Calu3 (cell line): ENCODE measurements at regions of chr14 and their contacts with region 1.

Region 1: DNA sequence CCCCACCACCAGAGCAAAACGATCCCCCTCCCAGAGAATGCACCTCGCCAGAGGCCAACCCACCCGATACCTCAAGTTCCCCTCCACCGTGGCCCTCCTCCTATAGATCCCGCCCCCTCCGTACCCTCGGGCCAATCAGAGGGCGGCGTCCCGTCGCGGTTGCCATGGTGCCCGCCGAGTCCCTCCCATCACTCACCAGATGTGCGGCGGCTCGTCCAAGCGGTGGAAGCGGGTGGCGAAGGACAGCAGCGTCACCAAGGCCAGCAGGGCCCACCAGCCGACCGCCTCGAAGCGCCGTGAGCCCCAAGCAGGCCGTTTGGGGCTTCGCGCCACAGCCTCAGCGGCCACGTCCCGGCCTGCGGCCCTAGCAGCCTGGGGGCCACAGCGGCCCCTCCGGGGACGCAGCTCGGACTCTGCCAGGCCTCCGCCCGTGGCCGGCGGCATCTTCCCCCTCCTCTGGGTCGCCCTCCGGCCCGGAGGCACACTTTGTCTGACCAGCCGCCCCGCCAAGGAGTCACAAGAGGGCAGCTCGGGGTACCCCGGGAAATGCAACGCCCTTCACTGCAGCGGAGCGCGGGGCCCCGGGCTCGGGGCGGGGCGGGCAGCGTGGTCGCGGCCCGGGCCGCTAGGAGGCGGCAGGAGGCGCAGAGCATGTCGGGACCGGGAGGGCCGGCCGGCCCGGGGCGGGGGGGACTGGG is at the start of gene POMT2:
- DNase-seq: peak; percentile 94
- H3K4me3 Mint-ChIP-seq: peak within 1 kb of the TSS; percentile 96
- H3K27ac Mint-ChIP-seq: peak within 1 kb of the TSS; percentile 97
- H3K4me1 Mint-ChIP-seq: peaks cover 31% of the 10 kb centered on the region
- H3K27me3 Mint-ChIP-seq: no peaks in the 10 kb centered on the region
- CTCF ChIP-seq: peak; percentile 45
- total RNA-seq, gene POMT2: 21.7 and 22.9 TPM in 2 replicates

Region 2: GRCh38 chr14:76337635-76338545 is 982.5 kb before region 1 on chr14:
- CTCF ChIA-PET with region 1: no interaction called
- intact Hi-C with region 1: no loop called
- DNase-seq: no peak
- H3K4me3 Mint-ChIP-seq: no peak overlapping the region
- H3K27ac Mint-ChIP-seq: no peak overlapping the region
- H3K4me1 Mint-ChIP-seq: no peaks in the 10 kb centered on the region
- H3K27me3 Mint-ChIP-seq: peaks cover 66% of the 10 kb centered on the region
- CTCF ChIP-seq: no peak

Region 3: GRCh38 chr14:77306851-77307765 is 13.3 kb before region 1 on chr14:
- CTCF ChIA-PET with region 1: interaction called, 94 read pairs
- intact Hi-C with region 1: loop called (anchors 1 kb)
- DNase-seq: no peak
- H3K4me3 Mint-ChIP-seq: no peak overlapping the region
- H3K27ac Mint-ChIP-seq: no peak overlapping the region
- H3K4me1 Mint-ChIP-seq: peaks cover 36% of the 10 kb centered on the region
- H3K27me3 Mint-ChIP-seq: no peaks in the 10 kb centered on the region
- CTCF ChIP-seq: no peak

Region 4: GRCh38 chr14:77390188-77390587 is 69.8 kb after region 1 on chr14:
- CTCF ChIA-PET with region 1: no interaction called
- intact Hi-C with region 1: no loop called
- DNase-seq: no peak
- H3K4me3 Mint-ChIP-seq: no peak overlapping the region
- H3K27ac Mint-ChIP-seq: no peak overlapping the region
- H3K4me1 Mint-ChIP-seq: no peaks in the 10 kb centered on the region
- H3K27me3 Mint-ChIP-seq: no peaks in the 10 kb centered on the region
- CTCF ChIP-seq: no peak

Region 5: DNA sequence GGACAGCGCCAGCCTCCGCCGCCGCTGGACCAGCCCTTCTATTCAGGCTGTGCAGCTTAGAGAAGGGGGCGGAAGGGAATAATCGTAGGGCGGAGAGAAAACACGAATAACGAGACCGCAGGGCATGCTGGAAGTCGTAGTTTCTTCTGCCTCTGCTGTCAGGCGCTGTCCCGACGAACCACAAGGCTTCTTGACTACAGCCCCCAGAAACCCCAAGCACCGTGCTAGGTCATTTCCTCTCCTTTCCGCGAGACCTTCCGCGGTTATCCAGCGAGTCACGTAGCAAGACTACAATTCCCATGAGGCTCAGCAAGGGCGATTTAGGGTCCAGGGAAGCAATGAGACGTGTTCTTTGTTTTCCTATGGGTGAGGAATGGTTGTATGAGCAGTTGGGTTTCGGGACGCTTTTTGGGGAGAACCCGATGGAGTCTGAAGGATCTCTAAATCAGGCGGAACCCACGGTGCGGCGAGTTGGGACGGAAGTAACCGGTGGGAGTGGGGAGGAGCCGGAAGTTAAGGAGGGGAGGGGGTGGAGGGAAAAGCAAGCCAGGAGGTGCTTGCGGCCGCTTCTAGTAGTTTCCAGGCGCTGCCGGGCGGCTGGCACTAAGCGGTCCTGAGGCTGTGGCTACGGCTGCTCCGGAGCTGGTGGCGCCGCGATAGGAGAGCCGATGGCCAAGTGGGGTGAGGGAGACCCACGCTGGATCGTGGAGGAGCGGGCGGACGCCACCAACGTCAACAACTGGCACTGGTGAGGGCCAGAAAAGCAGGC is 137.3 kb after region 1 on chr14 and contains the starts of genes AHSA1 and VIPAS39:
- CTCF ChIA-PET with region 1: interaction called, 3 read pairs
- intact Hi-C with region 1: loop called (anchors 5 kb)
- DNase-seq: peak; percentile 92
- H3K4me3 Mint-ChIP-seq: peak within 1 kb of the TSS; percentile 91
- H3K27ac Mint-ChIP-seq: peak within 1 kb of the TSS; percentile 95
- H3K4me1 Mint-ChIP-seq: peaks cover 12% of the 10 kb centered on the region
- H3K27me3 Mint-ChIP-seq: no peaks in the 10 kb centered on the region
- CTCF ChIP-seq: no peak
- total RNA-seq, gene AHSA1: 287 and 313 TPM in 2 replicates
- total RNA-seq, gene VIPAS39: 19.3 and 19.4 TPM in 2 replicates